GM10248 (cell line): ENCODE measurements at regions of chr1 and their contacts with region 1.

Region 1: GRCh38 chr1:28581536-28582247 is 10.4 kb upstream of the RAB42 start:
- DNase-seq: peak; percentile 96
- CTCF ChIP-seq: no peak

Region 2: DNA sequence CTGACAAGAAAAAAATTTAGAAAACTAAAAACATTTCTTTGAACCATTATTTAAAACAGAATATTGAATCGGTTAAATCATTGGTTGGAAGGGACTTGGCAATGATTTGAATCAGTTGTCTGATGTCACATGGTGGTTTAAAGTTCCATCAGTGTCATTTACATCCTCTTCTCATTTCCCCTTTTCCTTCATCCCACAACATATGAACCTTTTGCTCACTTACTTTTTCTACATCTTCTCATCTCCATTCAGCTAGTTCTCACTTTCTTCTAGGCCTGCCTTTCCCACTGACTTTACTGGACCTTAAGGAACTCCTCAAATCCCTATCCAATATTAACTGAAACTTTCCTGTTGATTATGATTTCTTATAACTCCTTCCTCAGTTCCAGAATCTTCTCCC is 153.7 kb before region 1 on chr1:
- CTCF ChIA-PET with region 1: no interaction called
- POLR2A ChIA-PET with region 1: no interaction called
- DNase-seq: peak; percentile 49
- CTCF ChIP-seq: no peak

Region 3: GRCh38 chr1:28505406-28506187 is 76.1 kb before region 1 on chr1 and contains the start of gene RCC1:
- CTCF ChIA-PET with region 1: interaction called, 7 read pairs
- POLR2A ChIA-PET with region 1: interaction called, 36 read pairs
- DNase-seq: peak; percentile 97
- CTCF ChIP-seq: no peak

Region 4: DNA sequence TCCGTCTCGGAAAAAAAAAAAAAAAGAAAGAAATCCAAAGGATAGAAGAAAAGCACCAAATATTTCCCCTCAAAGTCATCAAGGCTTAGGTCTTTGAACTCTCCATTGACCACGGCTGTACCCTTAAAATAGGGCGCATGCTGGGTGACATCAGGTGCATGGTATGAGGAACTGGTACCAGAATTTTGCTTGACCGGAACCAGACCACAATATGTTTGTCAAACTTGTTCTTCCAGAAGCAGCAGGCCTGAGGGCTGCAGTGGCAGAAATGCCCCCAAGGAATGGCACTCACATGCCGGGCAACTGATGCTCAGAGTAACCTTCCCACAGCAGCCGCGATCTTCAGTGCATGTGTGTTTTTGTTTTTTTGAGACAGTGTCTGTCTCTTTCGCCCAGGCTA is 54.8 kb before region 1 on chr1:
- CTCF ChIA-PET with region 1: no interaction called
- POLR2A ChIA-PET with region 1: interaction called, 11 read pairs
- DNase-seq: no peak
- CTCF ChIP-seq: no peak

Region 5: DNA sequence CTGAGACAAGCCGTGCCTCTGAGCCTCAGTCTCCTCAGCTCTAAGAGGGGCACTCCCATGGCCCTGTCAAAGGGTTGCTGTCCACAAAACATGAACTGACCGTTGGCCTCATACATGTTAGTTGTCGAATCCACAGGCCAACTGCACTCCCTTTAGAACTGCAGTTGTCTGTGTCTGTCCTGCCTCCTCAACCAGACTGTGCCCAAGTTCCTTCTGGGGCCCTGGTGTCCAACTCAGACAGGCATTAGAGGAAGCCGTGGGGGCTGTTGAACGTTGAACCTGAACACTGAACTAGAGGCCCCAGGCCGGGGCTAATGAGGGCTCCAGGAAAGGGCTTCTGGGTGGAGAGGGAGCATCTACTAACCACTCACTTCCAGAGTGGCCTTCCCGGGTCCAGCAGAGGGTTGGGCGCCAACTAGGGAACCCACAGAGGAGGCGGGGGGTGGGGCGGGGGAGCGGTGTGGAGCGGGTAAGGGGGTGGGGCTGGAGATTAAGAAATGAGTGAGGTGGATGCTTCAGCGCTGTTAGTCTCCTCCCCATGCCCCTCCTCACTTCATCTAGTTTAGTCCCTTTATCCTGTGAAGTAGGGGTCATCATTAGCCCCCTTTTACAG is 10.1 kb after region 1 on chr1 and contains the start of gene RAB42:
- CTCF ChIA-PET with region 1: interaction called, 13 read pairs
- POLR2A ChIA-PET with region 1: interaction called, 30 read pairs
- DNase-seq: peak; percentile 63
- CTCF ChIP-seq: peak; percentile 4

Region 6: DNA sequence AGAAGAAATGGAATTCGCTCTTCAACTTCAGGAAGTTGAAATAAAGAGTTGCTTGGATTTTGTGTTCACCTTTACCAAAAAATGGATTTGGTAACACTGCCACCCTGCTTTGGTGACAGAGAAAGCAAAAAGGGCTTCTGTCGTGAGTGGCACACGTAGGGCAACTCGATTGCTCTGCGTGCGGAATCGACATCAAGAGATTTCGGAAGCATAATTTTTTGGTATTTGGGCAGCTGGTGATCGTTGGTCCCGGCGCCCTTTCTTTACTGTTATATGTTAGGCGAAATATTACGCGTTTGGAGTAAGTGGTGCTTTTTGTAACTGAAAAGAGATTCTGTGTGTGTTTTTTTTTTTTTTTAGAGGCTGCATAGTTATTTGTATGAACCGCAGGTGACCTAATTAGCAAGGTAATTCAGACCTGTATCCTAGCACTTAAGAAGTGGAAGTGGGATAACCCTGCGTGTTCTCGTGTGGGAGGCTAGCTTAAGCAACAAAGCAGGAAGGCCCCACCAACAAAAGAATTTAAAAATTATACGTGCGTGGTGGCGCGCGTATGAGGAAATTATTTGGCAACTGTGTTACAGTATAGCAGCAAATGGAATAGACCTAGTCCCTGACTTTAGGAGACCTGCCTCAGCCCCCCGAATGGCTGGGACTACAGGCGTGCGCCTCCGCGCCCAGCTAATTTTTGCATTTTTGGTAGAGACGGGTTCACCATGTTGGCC is 66.9 kb after region 1 on chr1 and contains the start of gene RNU11:
- CTCF ChIA-PET with region 1: no interaction called
- POLR2A ChIA-PET with region 1: interaction called, 49 read pairs
- DNase-seq: peak; percentile 76
- CTCF ChIP-seq: no peak